ENCODE measurements at regions of chr3 and their contacts with region 1.

Region 1: GRCh38 chr3:16906682-16907081 is 21.9 kb downstream of the PLCL2 start:
- DNase-seq: no peak
- H3K4me3 ChIP-seq: no peak overlapping the region
- CTCF ChIP-seq: no peak

Region 2: GRCh38 chr3:16834212-16834611 is 72.5 kb before region 1 on chr3:
- in situ Hi-C with region 1: loop called (anchors 5 kb)
- DNase-seq: no peak
- H3K4me3 ChIP-seq: no peak overlapping the region
- CTCF ChIP-seq: no peak

Region 3: DNA sequence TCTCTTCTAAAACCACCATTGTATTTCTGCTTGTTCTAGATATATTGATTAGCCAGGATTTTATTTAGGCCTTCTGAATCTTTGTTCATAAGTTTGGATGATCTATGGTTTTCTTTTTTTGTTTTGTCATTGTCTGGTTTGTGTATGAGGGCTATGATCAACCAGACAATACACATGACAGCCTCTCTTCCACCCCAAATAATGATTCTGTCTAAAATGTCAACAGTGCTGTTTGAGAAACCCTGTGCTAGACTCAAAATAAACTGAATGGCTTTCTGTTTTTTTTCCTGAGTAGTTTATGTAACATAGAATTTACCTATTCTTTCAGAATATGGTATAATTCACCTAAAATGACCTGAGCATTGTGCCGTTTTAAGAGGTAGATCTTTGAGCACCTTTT is 44.2 kb after region 1 on chr3:
- in situ Hi-C with region 1: no loop called
- DNase-seq: no peak
- H3K4me3 ChIP-seq: no peak overlapping the region
- CTCF ChIP-seq: no peak

Region 4: GRCh38 chr3:17023006-17023664 is 116.5 kb after region 1 on chr3:
- in situ Hi-C with region 1: no loop called
- DNase-seq: no peak
- H3K4me3 ChIP-seq: no peak overlapping the region
- CTCF ChIP-seq: no peak

Measured in astrocyte of the cerebellum (primary cell).